ENCODE measurements at regions of chr16 and their contacts with region 1.

Region 1: DNA sequence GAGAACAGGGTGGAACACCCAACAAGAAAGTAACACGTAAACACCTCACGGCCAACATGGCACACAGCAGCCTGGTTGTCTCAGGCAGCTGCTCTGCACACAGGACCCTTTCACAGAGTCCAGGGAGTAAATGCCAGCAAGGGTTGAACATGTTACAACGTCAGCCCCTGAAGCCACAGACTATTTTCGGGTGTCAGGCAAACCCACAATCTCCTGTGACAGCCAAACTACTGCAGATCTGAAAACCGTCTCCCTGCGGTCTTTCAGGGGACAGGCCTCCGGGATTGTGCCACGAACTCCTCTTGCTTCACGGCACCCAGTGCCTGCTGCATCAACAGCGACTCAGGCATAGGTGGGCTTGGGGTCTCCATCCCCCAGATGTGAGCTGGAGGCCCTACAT is 127.7 kb downstream of the XYLT1 start:
- DNase-seq: peak; percentile 63
- ATAC-seq: peak; percentile 81
- H3K4me3 ChIP-seq: no peak overlapping the region
- H3K27ac ChIP-seq: peak overlapping the region; percentile 52
- H3K4me1 ChIP-seq: peaks cover 68% of the 10 kb centered on the region
- H3K27me3 ChIP-seq: no peaks in the 10 kb centered on the region
- CTCF ChIP-seq: no peak
- EP300 ChIP-seq: peak; percentile 88 to 96
- POLR2A ChIP-seq: peak; percentile 19; the same call in 1 of the 2 replicates
- RAD21 ChIP-seq: peak; percentile 25; the same call in 1 of the 2 replicates

Region 2: GRCh38 chr16:16904601-16905000 is 438.4 kb before region 1 on chr16:
- CTCF ChIA-PET with region 1: no interaction called
- POLR2A ChIA-PET with region 1: no interaction called
- RAD21 ChIA-PET with region 1: no interaction called
- SMC1A ChIA-PET with region 1: no interaction called
- in situ Hi-C with region 1: no loop called
- intact Hi-C with region 1: no loop called
- DNase-seq: no peak
- ATAC-seq: no peak
- H3K4me3 ChIP-seq: no peak overlapping the region
- H3K27ac ChIP-seq: no peak overlapping the region
- H3K4me1 ChIP-seq: no peaks in the 10 kb centered on the region
- H3K27me3 ChIP-seq: no peaks in the 10 kb centered on the region
- CTCF ChIP-seq: no peak
- EP300 ChIP-seq: no peak
- POLR2A ChIP-seq: no peak
- RAD21 ChIP-seq: no peak

Region 3: DNA sequence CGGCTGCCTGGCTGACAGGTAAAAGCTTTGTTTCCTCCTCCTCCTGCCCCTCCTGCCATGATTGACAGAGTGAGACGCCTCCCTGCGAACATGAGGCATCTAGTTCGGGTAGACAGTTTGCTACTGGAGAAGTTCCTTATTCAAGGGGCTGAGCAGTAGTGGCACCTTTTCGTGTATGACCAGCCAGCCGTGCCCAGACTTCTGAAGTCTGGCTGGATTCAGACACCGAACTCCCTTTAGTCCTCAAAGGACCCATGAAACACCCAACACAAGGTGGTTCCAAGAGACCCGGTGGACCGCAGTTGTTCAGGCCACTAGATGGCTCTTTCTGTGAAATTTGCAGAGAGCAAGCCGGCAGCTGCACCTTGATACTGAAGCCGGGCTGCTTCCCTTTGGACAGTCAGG is 65.0 kb before region 1 on chr16:
- CTCF ChIA-PET with region 1: interaction called, 9 read pairs
- POLR2A ChIA-PET with region 1: interaction called, 3 read pairs
- RAD21 ChIA-PET with region 1: interaction called, 23 read pairs
- SMC1A ChIA-PET with region 1: interaction called, 17 read pairs
- in situ Hi-C with region 1: no loop called
- intact Hi-C with region 1: no loop called
- DNase-seq: no peak
- ATAC-seq: peak; percentile 77
- H3K4me3 ChIP-seq: no peak overlapping the region
- H3K27ac ChIP-seq: no peak overlapping the region
- H3K4me1 ChIP-seq: peaks cover 39% of the 10 kb centered on the region
- H3K27me3 ChIP-seq: no peaks in the 10 kb centered on the region
- CTCF ChIP-seq: peak; percentile 59 to 66 (median 62); a peak in 5 of 6 replicates
- EP300 ChIP-seq: no peak
- POLR2A ChIP-seq: no peak
- RAD21 ChIP-seq: peak; percentile 70

Region 4: GRCh38 chr16:17313085-17313611 is 29.9 kb before region 1 on chr16:
- CTCF ChIA-PET with region 1: interaction called, 3 read pairs
- POLR2A ChIA-PET with region 1: interaction called, 3 read pairs
- RAD21 ChIA-PET with region 1: interaction called, 6 read pairs
- SMC1A ChIA-PET with region 1: interaction called, 37 read pairs
- in situ Hi-C with region 1: no loop called
- intact Hi-C with region 1: no loop called
- DNase-seq: no peak
- ATAC-seq: peak; percentile 18; the same call in 2 of the 3 replicates
- H3K4me3 ChIP-seq: no peak overlapping the region
- H3K27ac ChIP-seq: no peak overlapping the region
- H3K4me1 ChIP-seq: peaks cover 10% of the 10 kb centered on the region
- H3K27me3 ChIP-seq: no peaks in the 10 kb centered on the region
- CTCF ChIP-seq: no peak
- EP300 ChIP-seq: no peak
- POLR2A ChIP-seq: no peak
- RAD21 ChIP-seq: no peak

Region 5: DNA sequence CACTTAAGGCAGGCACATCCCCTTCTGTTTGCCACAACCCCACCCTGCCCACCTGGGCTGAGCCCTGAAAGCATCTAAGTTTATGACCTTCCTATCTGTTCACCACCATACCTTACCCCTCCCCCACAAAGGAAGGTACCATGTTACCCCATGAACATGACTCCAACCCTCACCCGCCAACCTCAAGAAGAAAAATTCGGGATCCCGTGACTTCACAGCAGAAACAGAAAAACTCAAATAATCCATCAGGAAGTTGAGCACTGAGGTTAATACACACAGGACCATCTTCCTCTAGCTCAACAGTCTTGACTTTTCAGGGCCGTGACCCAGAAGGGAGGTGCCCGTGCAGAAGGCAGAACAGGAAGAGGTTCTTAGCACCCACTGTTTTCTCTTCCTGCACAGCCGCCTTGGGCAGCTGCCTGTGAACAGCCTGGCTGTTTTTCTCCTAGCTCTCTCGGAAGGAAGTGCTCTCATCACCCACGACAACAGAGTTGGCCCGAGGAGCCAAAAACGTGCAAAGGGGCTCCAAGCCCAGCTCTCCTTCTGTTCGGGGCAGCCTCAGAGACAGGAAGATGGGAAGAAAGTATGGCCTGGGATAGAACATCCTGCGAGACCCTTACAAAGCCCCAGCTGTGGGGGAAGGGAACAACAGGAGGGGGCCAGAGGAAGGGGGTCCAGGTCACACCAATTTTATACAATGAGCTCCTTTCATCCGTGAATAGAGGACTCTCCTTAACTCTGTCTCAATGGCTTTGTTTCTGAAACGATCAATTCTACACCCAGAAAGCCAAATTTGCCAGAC is 26.6 kb after region 1 on chr16:
- CTCF ChIA-PET with region 1: interaction called, 47 read pairs
- POLR2A ChIA-PET with region 1: interaction called, 46 read pairs
- RAD21 ChIA-PET with region 1: interaction called, 162 read pairs
- SMC1A ChIA-PET with region 1: interaction called, 303 read pairs
- in situ Hi-C with region 1: no loop called
- intact Hi-C with region 1: no loop called
- DNase-seq: peak; percentile 53
- ATAC-seq: peak; percentile 94
- H3K4me3 ChIP-seq: peak overlapping the region; percentile 41; the same call in 1 of the 2 replicates
- H3K27ac ChIP-seq: peak overlapping the region; percentile 36
- H3K4me1 ChIP-seq: peaks cover 52% of the 10 kb centered on the region
- H3K27me3 ChIP-seq: no peaks in the 10 kb centered on the region
- CTCF ChIP-seq: no peak
- EP300 ChIP-seq: peak in 1 of 2 experiments; percentile 49; a peak in 1 of 4 replicates
- POLR2A ChIP-seq: peak; percentile 50
- RAD21 ChIP-seq: no peak

Region 6: DNA sequence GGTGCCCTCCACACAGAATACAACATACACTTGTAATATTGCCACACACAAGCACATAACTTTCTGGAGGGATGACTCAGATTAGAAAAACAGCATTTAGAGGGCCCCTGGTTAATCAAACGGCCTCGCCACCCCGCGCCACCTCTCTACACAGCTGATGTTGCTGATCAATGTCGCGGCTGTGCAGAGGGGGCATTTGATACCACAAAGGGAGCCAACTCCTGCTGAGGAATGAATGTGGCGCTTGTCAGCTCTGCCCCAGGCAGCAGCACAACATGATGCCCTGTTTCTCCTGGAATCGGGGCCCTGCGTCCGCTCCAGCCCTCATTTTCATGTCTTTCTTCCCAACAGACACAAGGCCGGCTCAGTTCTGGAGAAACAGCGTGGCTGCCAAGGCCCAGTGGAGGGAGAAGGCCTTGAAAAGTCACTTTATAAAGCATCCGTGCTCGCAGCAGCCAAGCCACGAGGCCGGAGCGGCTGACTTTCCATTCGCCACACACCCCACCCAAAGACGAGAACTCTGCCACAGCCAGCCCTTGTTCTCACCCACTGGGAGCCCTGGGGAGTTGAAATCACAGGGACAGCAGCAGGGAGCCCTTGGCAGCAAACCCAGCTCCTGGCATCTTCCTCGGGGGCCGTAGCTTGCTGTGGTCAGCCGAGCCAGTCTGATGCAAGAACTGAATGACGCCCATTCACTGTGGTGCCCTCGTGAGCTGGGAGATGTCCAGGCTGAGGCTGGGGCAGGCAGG is 62.1 kb after region 1 on chr16:
- CTCF ChIA-PET with region 1: interaction called, 8 read pairs
- POLR2A ChIA-PET with region 1: interaction called, 3 read pairs
- RAD21 ChIA-PET with region 1: interaction called, 11 read pairs
- SMC1A ChIA-PET with region 1: interaction called, 17 read pairs
- in situ Hi-C with region 1: no loop called
- intact Hi-C with region 1: no loop called
- DNase-seq: no peak
- ATAC-seq: no peak
- H3K4me3 ChIP-seq: no peak overlapping the region
- H3K27ac ChIP-seq: no peak overlapping the region
- H3K4me1 ChIP-seq: peaks cover 24% of the 10 kb centered on the region
- H3K27me3 ChIP-seq: no peaks in the 10 kb centered on the region
- CTCF ChIP-seq: no peak
- EP300 ChIP-seq: no peak
- POLR2A ChIP-seq: no peak
- RAD21 ChIP-seq: no peak

Region 7: DNA sequence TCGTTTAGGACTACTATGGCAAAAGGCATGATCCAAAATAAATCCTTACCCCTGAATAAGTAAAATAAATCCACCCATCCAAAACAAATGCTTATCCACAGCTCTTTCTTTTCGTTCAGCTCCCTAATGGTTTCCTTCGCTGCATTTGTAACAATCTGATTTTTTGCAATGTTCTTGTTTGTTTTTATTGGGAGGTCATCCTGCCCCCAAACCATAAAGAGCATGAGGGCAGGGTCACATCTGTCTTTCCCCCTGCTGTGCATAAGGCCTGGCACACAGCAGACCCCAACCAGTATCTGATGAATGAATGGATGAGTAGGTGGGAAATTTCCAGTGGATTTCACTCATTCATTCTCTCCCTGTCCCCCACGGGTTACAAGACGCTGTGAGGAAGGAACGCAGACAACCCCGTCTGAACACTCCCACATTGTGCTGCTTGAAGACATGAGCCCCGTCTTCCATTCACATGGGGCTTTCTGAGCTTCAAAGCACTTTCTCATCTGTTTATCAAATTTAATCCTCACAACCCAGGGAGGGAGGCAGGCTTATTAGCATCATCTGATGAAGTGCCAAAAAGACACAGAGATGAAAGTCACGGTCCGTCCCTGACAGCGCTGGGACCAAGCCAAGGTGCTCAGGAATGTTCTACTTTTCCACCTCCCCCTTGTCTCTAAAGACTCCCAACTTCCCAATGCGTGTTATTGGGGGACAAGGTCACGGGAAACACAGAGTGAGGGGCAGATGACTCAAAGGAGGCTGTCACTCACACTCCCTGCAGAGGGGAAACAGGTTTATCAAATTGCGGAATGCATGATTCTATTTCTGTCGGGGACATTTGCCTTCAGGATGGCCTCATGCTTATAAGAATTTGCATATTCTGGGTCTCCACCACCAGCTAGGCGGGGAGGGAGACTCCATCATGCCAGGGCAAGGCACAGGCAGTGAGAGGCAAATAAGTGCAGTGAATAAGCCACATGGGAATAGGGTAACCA is 116.8 kb after region 1 on chr16:
- CTCF ChIA-PET with region 1: interaction called, 14 read pairs
- POLR2A ChIA-PET with region 1: interaction called, 4 read pairs
- RAD21 ChIA-PET with region 1: interaction called, 14 read pairs
- SMC1A ChIA-PET with region 1: interaction called, 39 read pairs
- in situ Hi-C with region 1: no loop called
- intact Hi-C with region 1: loop called (anchors 2 kb)
- DNase-seq: no peak
- ATAC-seq: peak; percentile 72
- H3K4me3 ChIP-seq: no peak overlapping the region; the same call in 1 of the 2 replicates
- H3K27ac ChIP-seq: no peak overlapping the region
- H3K4me1 ChIP-seq: peaks cover 40% of the 10 kb centered on the region
- H3K27me3 ChIP-seq: no peaks in the 10 kb centered on the region
- CTCF ChIP-seq: no peak
- EP300 ChIP-seq: no peak
- POLR2A ChIP-seq: no peak
- RAD21 ChIP-seq: no peak

Region 8: DNA sequence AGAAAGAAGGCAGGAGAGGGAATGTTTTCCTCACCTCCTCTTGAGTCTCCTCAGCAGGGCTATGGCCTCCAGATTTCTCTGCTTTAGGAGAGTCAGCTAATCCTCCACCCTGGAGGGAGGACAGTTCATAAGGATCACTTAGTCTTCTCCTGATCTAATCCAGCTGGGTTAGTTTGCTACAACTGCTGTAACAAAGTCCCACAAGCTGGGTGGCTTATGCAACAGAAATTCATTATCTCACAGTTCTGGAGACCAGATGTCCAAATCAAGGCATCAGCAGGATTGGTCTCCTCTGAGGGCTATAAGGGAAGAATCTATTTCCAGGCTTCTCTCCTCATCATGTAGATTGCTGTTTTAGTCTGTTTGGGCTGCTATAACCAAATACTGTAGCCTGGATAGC is 168.3 kb after region 1 on chr16:
- CTCF ChIA-PET with region 1: no interaction called
- POLR2A ChIA-PET with region 1: no interaction called
- RAD21 ChIA-PET with region 1: no interaction called
- SMC1A ChIA-PET with region 1: no interaction called
- in situ Hi-C with region 1: no loop called
- intact Hi-C with region 1: no loop called
- DNase-seq: no peak
- ATAC-seq: no peak
- H3K4me3 ChIP-seq: no peak overlapping the region
- H3K27ac ChIP-seq: no peak overlapping the region
- H3K4me1 ChIP-seq: no peaks in the 10 kb centered on the region
- H3K27me3 ChIP-seq: 0 out of 4 replicates have a peak, but pooled peaks cover 0 to 3% of the 10 kb centered on the region in 2 experiments
- CTCF ChIP-seq: no peak
- EP300 ChIP-seq: no peak
- POLR2A ChIP-seq: no peak
- RAD21 ChIP-seq: no peak

Measured in GM12878 (cell line).